Esophagus muscularis mucosa (tissue), 4 donors: ENCODE measurements at regions of chr9 and their contacts with region 1.

Region 1: GRCh38 chr9:18379073-18379811 is 94.7 kb upstream of the ADAMTSL1 start:
- DNase-seq: no peak
- H3K4me3 ChIP-seq: no peak overlapping the region
- H3K27ac ChIP-seq: no peak overlapping the region
- H3K4me1 ChIP-seq: peaks cover 0 to 10% (median 9%) of the 10 kb centered on the region in 4 donors
- H3K27me3 ChIP-seq: no peaks in the 10 kb centered on the region
- CTCF ChIP-seq: no peak
- EP300 ChIP-seq: no peak
- POLR2A ChIP-seq: no peak

Region 2: GRCh38 chr9:18268381-18268780 is 110.9 kb before region 1 on chr9:
- intact Hi-C with region 1: loop called (anchors 10 kb)
- DNase-seq: no peak
- H3K4me3 ChIP-seq: no peak overlapping the region
- H3K27ac ChIP-seq: no peak overlapping the region
- H3K4me1 ChIP-seq: peaks cover 0 to 13% (median 11%) of the 10 kb centered on the region in 4 donors
- H3K27me3 ChIP-seq: no peaks in the 10 kb centered on the region
- CTCF ChIP-seq: no peak
- EP300 ChIP-seq: no peak
- POLR2A ChIP-seq: no peak